Lower leg skin (tissue), 4 donors: ENCODE measurements at regions of chr14 and their contacts with region 1.

Region 1: GRCh38 chr14:64573109-64573508 is 23.3 kb downstream of the PPP1R36 start:
- DNase-seq: no peak
- H3K4me3 ChIP-seq: no peak overlapping the region
- CTCF ChIP-seq: no peak
- POLR2A ChIP-seq: no peak

Region 2: DNA sequence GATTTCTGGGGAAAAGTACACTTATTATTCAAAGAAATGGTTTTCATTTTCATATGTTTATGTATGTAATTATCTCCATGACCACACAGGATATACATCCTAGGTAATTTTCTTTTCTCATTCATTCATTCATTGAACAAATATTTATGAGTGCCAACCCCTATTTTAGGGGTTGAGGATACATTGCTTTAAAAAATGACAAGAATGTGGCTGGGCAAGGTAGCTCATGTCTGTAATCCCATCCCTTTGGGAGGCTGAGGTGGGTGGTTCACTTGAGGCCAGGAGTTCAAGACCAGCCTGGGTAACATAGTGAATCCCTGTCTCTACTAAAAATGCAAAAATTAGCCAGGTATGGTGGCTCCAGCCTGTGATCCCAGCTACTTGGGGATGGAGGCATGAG is 886.2 kb before region 1 on chr14:
- intact Hi-C with region 1: no loop called
- DNase-seq: no peak
- H3K4me3 ChIP-seq: no peak overlapping the region
- CTCF ChIP-seq: no peak
- POLR2A ChIP-seq: no peak

Region 3: DNA sequence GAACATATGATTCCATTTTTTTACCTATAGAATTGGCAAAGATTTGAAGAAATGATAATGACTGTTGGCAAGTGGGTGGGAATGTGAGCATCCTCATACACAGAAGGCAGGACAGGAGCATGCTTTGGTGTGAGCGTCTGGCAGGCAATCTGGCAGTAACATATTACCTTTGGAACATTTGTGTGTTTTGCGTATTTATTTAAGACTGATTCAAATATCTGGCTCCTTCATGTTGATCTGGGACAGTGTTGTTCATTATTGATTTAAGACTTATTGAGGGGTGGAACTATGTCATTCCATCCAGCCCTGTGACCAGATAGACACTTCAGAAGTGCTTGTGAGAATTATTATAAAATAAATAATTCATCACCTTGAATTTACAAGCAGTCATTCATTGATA is 29.7 kb after region 1 on chr14:
- intact Hi-C with region 1: loop called (anchors 2 kb)
- DNase-seq: no peak
- H3K4me3 ChIP-seq: no peak overlapping the region
- CTCF ChIP-seq: no peak
- POLR2A ChIP-seq: no peak